ENCODE measurements at regions of chr5 and their contacts with region 1.

Region 1: GRCh38 chr5:60944904-60945812 is at the starts of genes ERCC8 and NDUFAF2:
- DNase-seq: peak; percentile 91
- ATAC-seq: peak; percentile 97
- H3K4me3 ChIP-seq: peak within 1 kb of the TSS; percentile 72 to 88 (median 88)
- H3K4me3 Mint-ChIP-seq: no peak within 1 kb of the TSS
- H3K27ac ChIP-seq: peak within 1 kb of the TSS; percentile 53 to 75
- H3K27ac Mint-ChIP-seq: no peak within 1 kb of the TSS
- H3K4me1 ChIP-seq: peaks cover 20% of the 10 kb centered on the region in 2 donors
- H3K4me1 Mint-ChIP-seq: peaks cover 26% of the 10 kb centered on the region
- H3K27me3 ChIP-seq: no peaks in the 10 kb centered on the region
- H3K27me3 Mint-ChIP-seq: no peaks in the 10 kb centered on the region
- CTCF ChIP-seq: no peak
- total RNA-seq, gene ERCC8: 8.3 and 9.2 TPM in 2 replicates
- total RNA-seq, gene NDUFAF2: 9.7 and 10.7 TPM in 2 replicates

Region 2: GRCh38 chr5:60699530-60700382 is 245.4 kb before region 1 on chr5 and contains the start of gene DEPDC1B:
- CTCF ChIA-PET with region 1: no interaction called
- POLR2A ChIA-PET with region 1: interaction called, 4 read pairs
- intact Hi-C with region 1: loop called (anchors 5 kb)
- DNase-seq: peak; percentile 86
- ATAC-seq: peak; percentile 88
- H3K4me3 ChIP-seq: peak within 1 kb of the TSS; percentile 79 to 89 (median 85)
- H3K4me3 Mint-ChIP-seq: peak within 1 kb of the TSS; percentile 95
- H3K27ac ChIP-seq: peak within 1 kb of the TSS in 1 of 2 donors; percentile 41
- H3K27ac Mint-ChIP-seq: peak within 1 kb of the TSS; percentile 55
- H3K4me1 ChIP-seq: peaks cover 4 to 17% of the 10 kb centered on the region in 2 donors
- H3K4me1 Mint-ChIP-seq: peaks cover 16% of the 10 kb centered on the region
- H3K27me3 ChIP-seq: peaks cover 0 to 8% (median 0%) of the 10 kb centered on the region in 4 experiments
- H3K27me3 Mint-ChIP-seq: no peaks in the 10 kb centered on the region
- CTCF ChIP-seq: no peak
- total RNA-seq, gene DEPDC1B: 0.25 and 0.85 TPM in 2 replicates

Region 3: DNA sequence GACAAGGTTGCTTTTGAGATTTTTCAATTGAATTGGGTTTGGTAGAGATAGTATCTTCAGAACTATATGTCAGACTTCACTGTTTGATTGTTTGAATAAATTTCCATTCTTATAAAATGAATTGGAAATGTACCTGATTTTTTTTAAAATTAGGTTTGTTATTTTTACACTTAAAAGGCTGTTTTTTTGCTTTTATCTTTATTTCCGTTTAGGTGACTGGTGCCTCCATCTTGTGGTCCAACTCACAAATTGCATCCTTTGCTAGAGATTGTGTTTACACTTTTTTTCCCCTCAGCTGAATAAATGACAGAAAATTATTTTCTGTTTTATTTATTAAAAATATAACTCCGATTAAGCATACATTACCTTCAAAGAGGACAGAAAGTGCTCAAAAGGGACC is 15.4 kb after region 1 on chr5:
- CTCF ChIA-PET with region 1: interaction called, 4 read pairs
- POLR2A ChIA-PET with region 1: no interaction called
- intact Hi-C with region 1: loop called (anchors 2 kb)
- DNase-seq: no peak
- ATAC-seq: no peak
- H3K4me3 ChIP-seq: no peak overlapping the region
- H3K4me3 Mint-ChIP-seq: no peak overlapping the region
- H3K27ac ChIP-seq: no peak overlapping the region
- H3K27ac Mint-ChIP-seq: no peak overlapping the region
- H3K4me1 ChIP-seq: no peaks in the 10 kb centered on the region
- H3K4me1 Mint-ChIP-seq: peaks cover 5% of the 10 kb centered on the region
- H3K27me3 ChIP-seq: no peaks in the 10 kb centered on the region
- H3K27me3 Mint-ChIP-seq: no peaks in the 10 kb centered on the region
- CTCF ChIP-seq: peak; percentile 69

Region 4: DNA sequence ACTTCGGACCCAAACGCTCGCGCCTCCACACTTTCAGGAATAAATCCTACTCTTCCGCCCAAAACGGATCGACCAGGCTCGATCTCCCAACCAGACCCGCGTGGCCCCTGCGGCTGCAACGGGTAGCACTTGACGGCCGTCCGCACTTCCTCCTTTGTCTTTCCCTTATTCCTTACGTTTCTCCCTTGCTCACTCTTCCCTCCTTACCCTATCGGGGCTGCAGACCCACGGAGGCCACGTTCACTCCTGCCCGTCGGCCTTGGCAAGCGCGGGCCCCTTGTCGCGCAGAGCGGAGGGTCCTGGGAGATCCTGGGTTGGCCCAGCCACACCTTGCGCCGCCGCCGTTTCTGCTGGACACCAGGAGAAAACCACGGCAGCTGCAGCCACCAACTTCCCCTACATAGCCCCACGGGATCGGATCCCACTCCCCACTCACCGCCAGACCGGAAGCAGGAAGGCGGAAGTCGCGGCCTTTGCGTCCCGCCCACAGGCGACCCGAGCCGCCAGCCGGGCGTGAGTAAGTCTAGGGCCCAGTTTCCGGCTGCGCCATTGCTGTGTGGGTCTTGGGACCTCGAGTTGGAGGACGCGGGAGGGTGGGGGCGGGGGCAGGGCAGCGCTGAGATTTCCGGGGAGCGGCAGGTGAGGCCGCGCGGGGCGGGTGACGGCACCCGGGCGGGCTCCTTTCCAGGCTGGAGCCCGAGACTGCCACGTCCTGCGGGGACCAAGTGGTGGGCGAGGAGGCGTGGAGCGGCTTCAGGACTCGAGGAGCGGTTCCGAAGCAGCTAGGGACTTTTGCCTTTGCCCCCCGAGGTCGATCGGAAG is 217.1 kb after region 1 on chr5 and contains the start of gene SMIM15:
- CTCF ChIA-PET with region 1: no interaction called
- POLR2A ChIA-PET with region 1: interaction called, 3 read pairs
- intact Hi-C with region 1: loop called (anchors 2 kb)
- DNase-seq: peak; percentile 87
- ATAC-seq: peak; percentile 90
- H3K4me3 ChIP-seq: peak within 1 kb of the TSS; percentile 86 to 96 (median 92)
- H3K4me3 Mint-ChIP-seq: peak within 1 kb of the TSS; percentile 97
- H3K27ac ChIP-seq: peak within 1 kb of the TSS; percentile 86 to 88
- H3K27ac Mint-ChIP-seq: peak within 1 kb of the TSS; percentile 97
- H3K4me1 ChIP-seq: peaks cover 18 to 20% of the 10 kb centered on the region in 2 donors
- H3K4me1 Mint-ChIP-seq: peaks cover 38% of the 10 kb centered on the region
- H3K27me3 ChIP-seq: no peaks in the 10 kb centered on the region
- H3K27me3 Mint-ChIP-seq: no peaks in the 10 kb centered on the region
- CTCF ChIP-seq: no peak
- total RNA-seq, gene SMIM15: 28.7 and 29.8 TPM in 2 replicates

Region 5: DNA sequence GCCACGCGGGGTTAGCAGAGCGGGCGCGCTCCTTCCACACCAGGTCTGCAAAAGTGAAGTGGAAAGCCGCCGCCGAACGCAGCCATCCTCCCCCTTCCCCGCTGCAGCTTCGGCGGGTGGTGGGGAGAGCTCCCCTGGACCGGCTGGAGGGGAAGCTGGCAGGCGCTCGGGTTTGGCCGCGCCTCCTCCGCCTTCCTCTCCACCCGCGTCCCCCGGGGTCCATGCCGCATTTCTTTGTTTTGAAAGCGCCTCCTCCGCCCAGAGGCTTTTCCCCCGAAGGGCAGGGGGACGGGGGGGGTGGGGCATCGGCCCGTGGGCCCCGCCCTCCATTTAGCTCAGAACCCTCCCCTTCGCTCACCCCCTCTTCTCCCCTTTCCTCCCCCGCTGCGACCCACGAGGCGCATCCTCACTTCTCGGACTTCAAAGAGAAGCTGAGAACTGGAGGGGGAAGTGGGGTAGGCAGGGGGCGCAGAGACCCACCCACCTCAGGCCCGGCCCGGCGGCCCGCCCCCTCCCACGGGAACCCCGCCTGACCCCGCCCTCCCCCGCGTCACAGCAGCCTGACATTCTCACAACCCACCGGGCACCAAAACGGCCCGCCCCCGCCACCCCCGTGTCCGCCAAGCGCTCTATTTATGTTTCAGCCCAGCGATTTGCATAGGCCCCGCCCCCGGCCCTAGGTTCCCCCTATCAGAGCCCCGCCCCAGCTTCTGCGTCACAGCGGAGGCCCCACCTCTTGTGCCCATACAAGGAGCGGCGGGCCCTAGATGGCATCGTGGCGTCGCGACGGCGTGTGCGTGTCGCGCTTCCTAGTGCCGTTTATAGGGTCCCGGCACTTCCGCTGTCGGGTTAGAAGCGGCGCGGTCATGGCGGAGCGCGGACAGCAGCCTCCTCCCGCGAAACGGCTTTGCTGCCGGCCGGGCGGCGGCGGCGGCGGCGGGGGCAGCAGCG is 386.5 kb after region 1 on chr5 and contains the start of gene ZSWIM6:
- CTCF ChIA-PET with region 1: no interaction called
- POLR2A ChIA-PET with region 1: no interaction called
- intact Hi-C with region 1: loop called (anchors 1 kb)
- DNase-seq: peak; percentile 100
- ATAC-seq: peak; percentile 76
- H3K4me3 ChIP-seq: peak within 1 kb of the TSS; percentile 43 to 98 (median 86)
- H3K4me3 Mint-ChIP-seq: peak within 1 kb of the TSS; percentile 94
- H3K27ac ChIP-seq: peak within 1 kb of the TSS; percentile 85 to 89
- H3K27ac Mint-ChIP-seq: peak within 1 kb of the TSS; percentile 98
- H3K4me1 ChIP-seq: peaks cover 32 to 38% of the 10 kb centered on the region in 2 donors
- H3K4me1 Mint-ChIP-seq: peaks cover 48% of the 10 kb centered on the region
- H3K27me3 ChIP-seq: peaks cover 0 to 6% (median 2%) of the 10 kb centered on the region in 4 experiments
- H3K27me3 Mint-ChIP-seq: peaks cover 10% of the 10 kb centered on the region
- CTCF ChIP-seq: no peak
- total RNA-seq, gene ZSWIM6: 15.9 and 16.4 TPM in 2 replicates

Region 6: DNA sequence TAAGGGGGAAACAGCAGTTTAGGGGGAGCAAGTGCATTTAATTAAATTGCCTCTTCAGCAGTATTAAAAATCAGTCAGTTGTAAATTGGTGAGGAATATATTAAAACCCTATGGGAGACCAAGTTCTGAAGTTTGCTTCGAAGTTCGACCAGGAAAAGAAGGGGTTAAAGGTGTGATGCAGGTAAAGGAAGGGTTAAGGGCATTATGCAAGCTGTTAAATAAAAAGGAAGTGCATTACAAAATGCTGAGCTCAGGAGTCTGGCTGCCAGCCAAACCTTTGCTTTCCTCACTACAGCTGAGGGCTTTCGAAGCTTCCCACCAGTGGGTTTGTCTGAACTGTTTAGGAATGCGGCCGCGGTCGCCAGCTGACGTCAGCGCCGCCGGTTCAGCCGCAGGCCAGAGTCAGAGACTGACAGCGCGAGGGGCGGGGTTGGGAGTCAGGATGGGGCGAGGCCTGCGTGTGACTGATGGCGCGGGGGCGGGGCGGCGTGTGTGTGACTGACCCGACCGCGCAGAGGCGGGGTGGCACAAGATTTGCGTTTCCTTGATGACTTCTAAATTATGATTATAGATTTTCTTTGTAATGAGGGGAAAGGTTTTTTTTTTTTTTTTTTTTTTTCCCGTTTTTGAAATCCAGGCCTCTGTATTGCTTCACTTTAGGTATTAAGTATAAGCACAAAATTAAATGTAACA is 463.5 kb after region 1 on chr5:
- CTCF ChIA-PET with region 1: interaction called, 3 read pairs
- POLR2A ChIA-PET with region 1: no interaction called
- intact Hi-C with region 1: loop called (anchors 1 kb)
- DNase-seq: peak; percentile 98
- ATAC-seq: peak; percentile 98
- H3K4me3 ChIP-seq: peak overlapping the region; percentile 34 to 58 (median 42)
- H3K4me3 Mint-ChIP-seq: peak overlapping the region; percentile 90
- H3K27ac ChIP-seq: peak overlapping the region in 1 of 2 donors; percentile 51
- H3K27ac Mint-ChIP-seq: peak overlapping the region; percentile 95
- H3K4me1 ChIP-seq: peaks cover 16 to 17% of the 10 kb centered on the region in 2 donors
- H3K4me1 Mint-ChIP-seq: peaks cover 35% of the 10 kb centered on the region
- H3K27me3 ChIP-seq: no peaks in the 10 kb centered on the region
- H3K27me3 Mint-ChIP-seq: no peaks in the 10 kb centered on the region
- CTCF ChIP-seq: no peak

Region 7: GRCh38 chr5:62403434-62404250 is 1458.5 kb after region 1 on chr5 and contains the start of gene DIMT1:
- CTCF ChIA-PET with region 1: no interaction called
- POLR2A ChIA-PET with region 1: no interaction called
- intact Hi-C with region 1: loop called (anchors 10 kb)
- DNase-seq: peak; percentile 93
- ATAC-seq: peak; percentile 99
- H3K4me3 ChIP-seq: peak within 1 kb of the TSS; percentile 92 to 98 (median 97)
- H3K4me3 Mint-ChIP-seq: peak within 1 kb of the TSS; percentile 100
- H3K27ac ChIP-seq: peak within 1 kb of the TSS; percentile 93 to 95
- H3K27ac Mint-ChIP-seq: peak within 1 kb of the TSS; percentile 87
- H3K4me1 ChIP-seq: peaks cover 5 to 16% of the 10 kb centered on the region in 2 donors
- H3K4me1 Mint-ChIP-seq: peaks cover 22% of the 10 kb centered on the region
- H3K27me3 ChIP-seq: no peaks in the 10 kb centered on the region
- H3K27me3 Mint-ChIP-seq: no peaks in the 10 kb centered on the region
- CTCF ChIP-seq: no peak
- total RNA-seq, gene DIMT1: 19.5 and 20.7 TPM in 2 replicates

Measured in B cell (primary cell).